Activated naive CD4-positive, alpha-beta T cell treated with anti-CD3 and anti-CD28 coated beads for 36 hours (primary cell): ENCODE measurements at regions of chr6 and their contacts with region 1.

Region 1: GRCh38 chr6:97394160-97394748 is 111.2 kb upstream of the MMS22L start:
- DNase-seq: peak; percentile 57
- H3K4me3 Mint-ChIP-seq: no peak overlapping the region
- H3K27ac Mint-ChIP-seq: no peak overlapping the region
- H3K4me1 Mint-ChIP-seq: no peaks in the 10 kb centered on the region
- H3K27me3 Mint-ChIP-seq: peaks cover 10% of the 10 kb centered on the region

Region 2: DNA sequence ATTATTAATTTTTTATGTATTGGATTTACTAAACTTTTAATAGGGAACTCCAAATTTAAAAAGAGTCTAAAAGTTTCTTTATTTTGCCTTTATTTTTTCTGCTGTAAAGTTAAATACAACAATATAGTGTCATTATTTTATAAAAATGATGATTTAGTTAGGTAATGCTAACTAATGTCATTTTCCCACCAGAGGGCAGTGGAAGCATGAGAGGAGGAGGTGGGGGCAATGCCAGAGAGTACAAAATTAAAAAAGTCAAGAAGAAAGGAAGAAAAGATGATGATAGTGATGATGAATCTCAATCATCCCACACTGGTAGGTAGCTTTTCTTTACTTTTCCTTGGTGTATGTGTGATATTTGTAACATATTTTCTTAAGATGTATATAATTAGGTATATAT is 851.6 kb before region 1 on chr6:
- CTCF ChIA-PET with region 1: no interaction called
- intact Hi-C with region 1: loop called (anchors 5 kb)
- DNase-seq: peak; percentile 6
- H3K4me3 Mint-ChIP-seq: no peak overlapping the region
- H3K27ac Mint-ChIP-seq: no peak overlapping the region
- H3K4me1 Mint-ChIP-seq: no peaks in the 10 kb centered on the region
- H3K27me3 Mint-ChIP-seq: no peaks in the 10 kb centered on the region

Region 3: DNA sequence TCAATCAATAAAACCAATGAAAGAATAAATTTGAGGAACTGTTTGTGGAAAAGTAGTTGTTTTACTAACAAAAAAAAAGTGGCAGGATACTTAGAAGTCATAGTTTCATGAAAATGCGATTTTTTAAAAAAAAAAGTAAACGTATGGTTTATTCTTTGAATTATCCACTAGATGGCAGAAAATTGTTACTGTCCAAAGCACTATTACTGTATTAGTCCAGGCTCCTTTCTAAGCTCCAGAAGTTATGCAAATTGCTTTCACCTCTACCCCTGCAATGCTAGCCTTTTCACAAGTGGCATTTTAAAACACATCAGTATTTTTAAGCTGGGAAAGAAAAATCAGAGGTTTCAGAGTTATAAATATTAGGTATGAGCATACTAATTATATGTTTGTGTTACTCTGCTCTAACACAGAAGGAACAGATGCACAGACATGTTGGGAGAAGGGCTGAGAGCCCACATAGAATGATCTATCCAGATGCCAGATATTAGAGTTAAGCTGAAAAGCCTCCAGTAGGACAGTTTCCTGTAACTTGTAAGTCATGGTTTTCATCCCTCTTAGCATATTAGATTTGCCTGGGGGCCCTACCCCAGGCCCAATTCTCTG is 767.4 kb before region 1 on chr6:
- CTCF ChIA-PET with region 1: no interaction called
- intact Hi-C with region 1: loop called (anchors 1 kb)
- DNase-seq: no peak
- H3K4me3 Mint-ChIP-seq: no peak overlapping the region
- H3K27ac Mint-ChIP-seq: no peak overlapping the region
- H3K4me1 Mint-ChIP-seq: no peaks in the 10 kb centered on the region
- H3K27me3 Mint-ChIP-seq: peaks cover 4% of the 10 kb centered on the region

Region 4: GRCh38 chr6:97068211-97068610 is 326.0 kb before region 1 on chr6:
- CTCF ChIA-PET with region 1: interaction called, 7 read pairs
- intact Hi-C with region 1: loop called (anchors 1 kb)
- DNase-seq: peak; percentile 49
- H3K4me3 Mint-ChIP-seq: no peak overlapping the region
- H3K27ac Mint-ChIP-seq: no peak overlapping the region
- H3K4me1 Mint-ChIP-seq: no peaks in the 10 kb centered on the region
- H3K27me3 Mint-ChIP-seq: no peaks in the 10 kb centered on the region

Region 5: DNA sequence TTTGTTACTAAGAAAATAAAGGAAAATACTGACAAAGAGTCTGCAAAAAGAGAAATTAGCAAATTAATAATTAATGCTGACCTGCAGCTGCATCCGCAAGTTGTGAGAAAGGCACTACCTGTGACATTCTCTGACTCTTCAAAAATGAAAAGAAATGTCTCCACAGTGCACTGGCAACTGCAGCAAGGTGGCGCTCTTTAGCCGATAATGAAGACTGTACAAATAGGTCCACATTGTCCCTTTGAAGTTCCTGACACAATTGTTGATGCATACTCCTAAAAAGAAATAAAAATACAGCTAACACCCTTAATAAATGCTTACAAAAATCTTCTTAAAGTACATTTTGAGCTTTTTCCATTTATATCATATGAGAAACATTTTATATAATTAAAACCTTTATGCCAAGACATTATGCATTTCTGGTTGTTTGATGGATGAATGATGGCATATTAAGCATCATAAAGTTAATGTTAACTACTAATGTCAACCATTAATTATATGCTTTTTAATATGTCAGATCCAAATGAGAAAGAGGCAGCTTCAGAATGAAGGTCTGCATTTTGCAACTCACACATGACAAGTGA is 207.7 kb before region 1 on chr6:
- CTCF ChIA-PET with region 1: interaction called, 7 read pairs
- intact Hi-C with region 1: loop called (anchors 1 kb)
- DNase-seq: peak; percentile 81
- H3K4me3 Mint-ChIP-seq: no peak overlapping the region
- H3K27ac Mint-ChIP-seq: no peak overlapping the region
- H3K4me1 Mint-ChIP-seq: no peaks in the 10 kb centered on the region
- H3K27me3 Mint-ChIP-seq: no peaks in the 10 kb centered on the region

Region 6: GRCh38 chr6:97215157-97215769 is 179.0 kb before region 1 on chr6:
- CTCF ChIA-PET with region 1: no interaction called
- intact Hi-C with region 1: loop called (anchors 1 kb)
- DNase-seq: no peak
- H3K4me3 Mint-ChIP-seq: no peak overlapping the region
- H3K27ac Mint-ChIP-seq: no peak overlapping the region
- H3K4me1 Mint-ChIP-seq: peaks cover 2% of the 10 kb centered on the region
- H3K27me3 Mint-ChIP-seq: no peaks in the 10 kb centered on the region

Region 7: DNA sequence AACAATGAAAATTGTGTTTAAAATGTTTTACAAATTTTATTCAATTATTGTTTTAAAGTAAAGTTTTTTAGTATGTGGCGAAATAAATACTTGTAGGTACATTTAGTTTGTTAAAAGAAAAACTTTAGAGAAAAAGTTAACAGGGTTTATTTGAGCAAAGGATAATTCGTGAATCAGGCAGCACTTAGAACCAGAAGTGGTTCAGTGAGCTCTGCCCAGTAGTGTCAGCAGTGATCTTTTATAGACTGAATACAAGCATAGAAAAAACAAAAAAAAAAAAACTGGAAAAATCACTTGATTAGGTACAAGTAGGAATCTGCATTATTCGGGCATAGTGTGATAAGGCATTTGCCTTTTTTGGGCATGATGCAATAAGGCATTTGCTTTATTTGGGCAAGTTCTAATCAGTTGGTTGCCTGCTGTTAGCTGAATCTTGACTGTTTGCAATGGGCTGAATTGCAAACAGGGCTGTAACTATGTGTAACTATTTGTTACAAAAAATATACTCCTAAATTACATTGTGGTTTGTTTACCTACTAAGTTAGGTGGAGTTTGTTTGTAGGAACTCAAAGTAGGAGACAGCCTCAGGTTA is 11.7 kb after region 1 on chr6:
- CTCF ChIA-PET with region 1: no interaction called
- intact Hi-C with region 1: no loop called
- DNase-seq: no peak
- H3K4me3 Mint-ChIP-seq: no peak overlapping the region
- H3K27ac Mint-ChIP-seq: no peak overlapping the region
- H3K4me1 Mint-ChIP-seq: no peaks in the 10 kb centered on the region
- H3K27me3 Mint-ChIP-seq: no peaks in the 10 kb centered on the region